Activated T-helper 2 cell treated with anti-CD3 and anti-CD28 coated beads, Interferon-gamma antibody, Interleukin-2, Interleukin-4, amounts not matched to agents 10 μg/mL and 5 μg/mL and 100 μg/mL, durations not matched to agents 14 hours and 24 hours and 36 hours (primary cell): ENCODE measurements at regions of chr15 and their contacts with region 1.

Region 1: DNA sequence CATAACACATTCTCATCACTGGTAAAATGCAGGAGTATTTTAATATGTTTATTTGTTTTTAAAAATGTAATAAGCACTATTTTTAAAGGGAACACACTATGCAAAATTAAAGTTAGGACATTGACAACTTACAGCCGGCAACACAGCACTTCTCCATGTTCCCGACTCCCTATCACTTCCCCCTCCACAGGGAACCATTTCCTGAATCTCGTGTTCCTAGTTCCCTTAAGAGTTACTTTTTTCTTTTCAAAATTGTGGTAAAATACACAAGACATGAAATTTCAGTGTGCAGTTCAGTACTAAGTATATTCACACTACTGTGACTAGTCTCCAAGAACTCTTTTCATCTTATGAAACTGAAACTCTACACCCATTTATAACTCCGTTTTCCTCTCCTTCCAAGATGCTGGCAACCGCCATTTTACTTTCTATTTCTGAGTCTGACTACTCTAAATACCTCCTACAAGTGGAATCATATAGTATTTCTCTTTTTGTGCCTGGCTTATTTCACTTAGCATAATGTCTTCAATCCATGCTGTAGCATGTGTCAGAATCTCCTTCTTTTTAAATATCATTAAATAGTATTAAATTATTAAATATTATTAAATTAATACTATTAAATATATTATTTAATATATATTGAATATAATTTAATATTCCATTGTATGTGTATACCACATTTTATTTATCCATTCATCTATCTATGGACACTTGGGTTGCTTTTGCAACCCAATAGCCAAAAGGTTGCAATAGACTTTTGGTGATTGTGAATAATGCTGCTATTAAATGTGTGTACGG is 25.9 kb upstream of the UBE2Q2 start:
- DNase-seq: no peak
- H3K4me3 Mint-ChIP-seq: peak overlapping the region; percentile 43
- H3K27ac Mint-ChIP-seq: peak overlapping the region; percentile 61
- H3K4me1 Mint-ChIP-seq: peaks cover 14% of the 10 kb centered on the region
- H3K27me3 Mint-ChIP-seq: peaks cover 3% of the 10 kb centered on the region

Region 2: GRCh38 chr15:75836953-75837321 is 19.6 kb after region 1 on chr15:
- intact Hi-C with region 1: loop called (anchors 1 kb)
- DNase-seq: peak; percentile 56
- H3K4me3 Mint-ChIP-seq: no peak overlapping the region
- H3K27ac Mint-ChIP-seq: no peak overlapping the region
- H3K4me1 Mint-ChIP-seq: peaks cover 2% of the 10 kb centered on the region
- H3K27me3 Mint-ChIP-seq: peaks cover 5% of the 10 kb centered on the region

Region 3: GRCh38 chr15:75849167-75849566 is 31.8 kb after region 1 on chr15:
- intact Hi-C with region 1: no loop called
- DNase-seq: no peak
- H3K4me3 Mint-ChIP-seq: no peak overlapping the region
- H3K27ac Mint-ChIP-seq: no peak overlapping the region
- H3K4me1 Mint-ChIP-seq: peaks cover 53% of the 10 kb centered on the region
- H3K27me3 Mint-ChIP-seq: no peaks in the 10 kb centered on the region

Region 4: DNA sequence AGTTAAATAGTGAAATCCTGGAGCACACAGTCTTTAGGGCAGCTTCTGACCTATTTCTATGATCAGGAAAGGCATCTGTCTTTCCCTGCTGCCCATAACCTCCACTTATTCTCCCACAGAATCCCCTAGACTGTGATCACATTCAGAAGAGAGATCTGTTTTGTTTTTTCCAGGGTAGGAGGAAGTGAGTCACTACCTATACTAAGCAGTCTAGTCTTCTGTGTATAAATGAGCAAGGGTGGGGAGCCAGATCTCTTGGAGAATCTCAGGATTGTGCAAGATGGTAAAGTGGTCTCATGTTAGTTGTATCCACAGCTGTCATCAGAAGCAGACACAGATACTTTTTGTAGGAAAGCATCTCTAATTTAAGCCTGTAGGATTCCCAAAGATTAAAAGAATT is 74.6 kb after region 1 on chr15:
- intact Hi-C with region 1: loop called (anchors 2 kb)
- DNase-seq: no peak
- H3K4me3 Mint-ChIP-seq: no peak overlapping the region
- H3K27ac Mint-ChIP-seq: peak overlapping the region; percentile 35
- H3K4me1 Mint-ChIP-seq: peaks cover 12% of the 10 kb centered on the region
- H3K27me3 Mint-ChIP-seq: no peaks in the 10 kb centered on the region

Region 5: GRCh38 chr15:76057332-76058000 is 240.1 kb after region 1 on chr15:
- intact Hi-C with region 1: no loop called
- DNase-seq: no peak
- H3K4me3 Mint-ChIP-seq: no peak overlapping the region
- H3K27ac Mint-ChIP-seq: no peak overlapping the region
- H3K4me1 Mint-ChIP-seq: peaks cover 22% of the 10 kb centered on the region
- H3K27me3 Mint-ChIP-seq: peaks cover 56% of the 10 kb centered on the region

Region 6: DNA sequence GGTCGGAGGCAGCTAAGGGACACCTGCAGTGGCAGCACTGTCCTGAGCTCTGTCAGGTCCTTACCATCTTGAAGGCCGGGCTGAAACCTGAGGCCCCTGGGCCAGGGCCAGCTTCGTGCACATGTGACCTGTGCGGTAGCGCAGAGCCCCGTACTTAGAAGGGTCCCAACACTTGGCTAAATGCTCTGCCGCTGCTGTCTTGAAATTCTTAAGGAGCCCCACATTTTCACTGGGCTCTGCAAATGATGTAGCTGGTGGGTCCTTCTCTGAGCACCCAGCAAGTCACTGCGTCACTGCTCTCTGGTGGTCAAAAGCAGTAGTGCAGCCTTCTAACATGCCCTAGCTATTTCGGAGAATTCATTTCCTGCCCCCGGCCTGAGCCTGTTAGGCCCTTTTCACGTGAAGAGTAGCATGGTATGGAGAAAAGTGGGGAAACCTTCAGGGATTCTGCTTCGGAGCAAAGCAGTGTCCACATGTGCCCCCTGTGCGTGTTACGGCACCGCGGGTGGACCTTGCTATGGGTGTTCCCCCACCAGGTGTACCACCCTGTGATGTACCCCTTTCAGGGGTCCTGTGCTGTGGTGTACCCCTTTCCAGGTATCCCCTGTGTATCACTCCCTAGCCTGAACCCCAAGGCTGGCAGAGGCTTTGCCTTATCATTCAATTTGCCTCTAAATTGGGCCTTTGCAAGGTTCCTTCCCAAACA is 322.2 kb after region 1 on chr15:
- intact Hi-C with region 1: loop called (anchors 5 kb)
- DNase-seq: peak; percentile 66
- H3K4me3 Mint-ChIP-seq: no peak overlapping the region
- H3K27ac Mint-ChIP-seq: no peak overlapping the region
- H3K4me1 Mint-ChIP-seq: peaks cover 3% of the 10 kb centered on the region
- H3K27me3 Mint-ChIP-seq: peaks cover 26% of the 10 kb centered on the region